CD4-positive, alpha-beta T cell (primary cell): ENCODE measurements at regions of chr20 and their contacts with region 1.

Region 1: GRCh38 chr20:45934586-45935415 is at the start of gene PCIF1:
- DNase-seq: peak; percentile 97 to 100 (median 98)
- ATAC-seq: peak; percentile 77
- H3K4me3 ChIP-seq: peak within 1 kb of the TSS; percentile 100
- H3K4me3 Mint-ChIP-seq: peak within 1 kb of the TSS; percentile 98
- H3K27ac ChIP-seq: peak within 1 kb of the TSS; percentile 96 to 99
- H3K27ac Mint-ChIP-seq: peak within 1 kb of the TSS; percentile 97
- H3K4me1 ChIP-seq: peaks cover 40% of the 10 kb centered on the region
- H3K4me1 Mint-ChIP-seq: peaks cover 34% of the 10 kb centered on the region
- H3K27me3 ChIP-seq: no peaks in the 10 kb centered on the region
- H3K27me3 Mint-ChIP-seq: no peaks in the 10 kb centered on the region
- CTCF ChIP-seq: no peak
- total RNA-seq, gene PCIF1: 100 TPM

Region 2: DNA sequence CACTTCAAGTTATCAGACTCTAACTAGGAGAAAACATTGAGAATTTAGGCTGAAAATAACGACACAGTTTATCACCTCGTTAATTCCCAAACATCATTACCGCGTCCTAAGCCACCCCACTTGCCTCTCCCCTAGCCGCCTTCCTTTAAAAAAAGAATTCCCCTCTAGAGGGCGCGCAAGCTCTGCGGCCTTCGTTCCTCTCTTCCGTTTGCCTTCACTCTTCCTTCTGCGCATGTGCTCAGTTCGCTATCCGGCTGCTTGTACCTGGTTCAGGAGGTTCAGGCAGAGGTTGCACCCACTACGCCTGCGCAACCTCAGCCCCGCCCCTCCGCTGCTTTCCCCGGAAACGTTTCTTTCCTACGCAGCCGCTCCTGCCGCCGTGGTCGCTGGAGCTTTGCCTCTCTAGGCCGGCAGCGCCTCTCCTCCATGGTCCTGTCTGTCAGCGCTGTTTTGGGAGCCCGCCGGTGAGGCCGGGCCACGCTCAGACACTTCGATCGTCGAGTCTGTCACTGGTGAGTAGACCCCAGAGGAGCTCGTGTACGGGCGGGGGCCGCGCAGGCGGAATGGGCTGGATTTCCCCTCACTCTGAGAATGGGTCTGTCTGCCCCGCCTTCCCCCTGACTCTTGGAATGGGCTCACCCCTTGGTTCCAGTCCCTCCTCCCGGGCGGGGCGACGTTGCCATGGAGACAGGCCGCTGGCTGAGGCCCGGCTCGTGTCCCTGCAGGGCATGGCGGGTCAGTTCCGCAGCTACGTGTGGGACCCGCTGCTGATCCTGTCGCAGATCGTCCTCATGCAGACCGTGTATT is 571.8 kb before region 1 on chr20 and contains the start of gene SYS1:
- CTCF ChIA-PET with region 1: no interaction called
- POLR2A ChIA-PET with region 1: interaction called, 10 read pairs
- intact Hi-C with region 1: no loop called
- DNase-seq: peak; percentile 97 to 100 (median 99)
- ATAC-seq: peak; percentile 86
- H3K4me3 ChIP-seq: peak within 1 kb of the TSS; percentile 96
- H3K4me3 Mint-ChIP-seq: peak within 1 kb of the TSS; percentile 91
- H3K27ac ChIP-seq: peak within 1 kb of the TSS; percentile 98 to 99
- H3K27ac Mint-ChIP-seq: peak within 1 kb of the TSS; percentile 85
- H3K4me1 ChIP-seq: peaks cover 55% of the 10 kb centered on the region
- H3K4me1 Mint-ChIP-seq: peaks cover 46% of the 10 kb centered on the region
- H3K27me3 ChIP-seq: no peaks in the 10 kb centered on the region
- H3K27me3 Mint-ChIP-seq: no peaks in the 10 kb centered on the region
- CTCF ChIP-seq: peak; percentile 92
- total RNA-seq, gene SYS1: 94.8 to 107 TPM

Region 3: DNA sequence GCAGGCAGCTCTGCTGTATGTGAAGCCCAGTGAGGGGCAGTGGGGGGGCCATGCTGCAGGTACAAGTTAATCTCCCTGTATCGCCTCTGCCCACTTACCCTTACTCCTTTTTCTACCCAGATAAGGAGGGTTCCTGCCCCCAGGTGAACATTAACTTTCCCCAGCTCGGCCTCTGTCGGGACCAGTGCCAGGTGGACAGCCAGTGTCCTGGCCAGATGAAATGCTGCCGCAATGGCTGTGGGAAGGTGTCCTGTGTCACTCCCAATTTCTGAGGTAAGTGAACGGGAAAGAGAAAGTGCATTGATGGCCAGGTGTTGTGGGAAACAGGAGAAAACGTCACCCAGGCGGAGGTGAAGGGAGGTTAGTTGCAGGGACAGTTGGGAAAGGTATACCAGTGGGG is 455.0 kb before region 1 on chr20:
- CTCF ChIA-PET with region 1: no interaction called
- POLR2A ChIA-PET with region 1: no interaction called
- intact Hi-C with region 1: no loop called
- DNase-seq: no peak
- ATAC-seq: no peak
- H3K4me3 ChIP-seq: no peak overlapping the region
- H3K4me3 Mint-ChIP-seq: no peak overlapping the region
- H3K27ac ChIP-seq: no peak overlapping the region
- H3K27ac Mint-ChIP-seq: no peak overlapping the region
- H3K4me1 ChIP-seq: no peaks in the 10 kb centered on the region
- H3K4me1 Mint-ChIP-seq: no peaks in the 10 kb centered on the region
- H3K27me3 ChIP-seq: peaks cover 20 to 31% of the 10 kb centered on the region in 2 experiments
- H3K27me3 Mint-ChIP-seq: peaks cover 56% of the 10 kb centered on the region
- CTCF ChIP-seq: no peak

Region 4: DNA sequence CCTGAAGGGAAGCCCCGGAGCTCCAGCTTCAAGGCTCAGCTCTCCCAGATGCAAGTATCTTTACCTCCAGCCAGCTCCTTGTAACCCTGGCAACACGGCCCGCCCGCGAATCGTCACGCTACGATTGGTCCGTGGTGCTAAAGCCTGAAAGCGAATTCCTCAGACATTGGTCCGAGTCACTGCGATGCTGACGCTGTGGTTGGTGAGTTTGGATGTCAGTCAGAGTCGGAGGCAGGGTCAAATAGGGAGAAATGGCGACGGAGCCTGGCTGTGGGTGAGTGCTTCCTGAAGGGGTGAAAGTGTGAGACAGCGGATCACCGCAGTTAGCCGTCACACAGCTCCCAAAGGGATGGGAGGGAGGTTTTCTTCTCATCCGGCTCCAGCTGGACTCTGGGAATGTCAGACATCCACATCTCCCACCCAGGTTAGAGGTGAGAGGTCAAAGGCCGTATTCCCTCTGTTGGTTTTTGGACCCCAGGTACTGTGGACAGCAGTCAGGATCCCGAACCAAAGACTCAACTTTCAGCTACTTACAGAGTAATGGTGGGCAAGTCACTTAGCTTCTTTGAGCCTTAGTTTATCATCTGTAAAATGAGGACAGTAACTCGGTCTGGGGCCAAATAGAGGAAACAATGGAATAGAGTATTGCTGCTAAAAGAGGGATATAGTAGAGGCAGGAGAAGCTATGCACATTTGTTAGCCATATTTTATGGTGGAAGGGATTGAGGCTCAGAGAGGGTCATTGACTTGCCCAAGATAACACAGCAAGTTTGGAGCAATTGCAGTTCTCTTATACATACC is 53.6 kb before region 1 on chr20 and contains the start of gene ZSWIM1:
- CTCF ChIA-PET with region 1: no interaction called
- POLR2A ChIA-PET with region 1: interaction called, 57 read pairs
- intact Hi-C with region 1: loop called in 1 of 2 experiments (anchors 2 kb)
- DNase-seq: peak; percentile 96 to 100 (median 99)
- ATAC-seq: peak; percentile 98
- H3K4me3 ChIP-seq: peak within 1 kb of the TSS; percentile 78
- H3K4me3 Mint-ChIP-seq: peak within 1 kb of the TSS; percentile 87
- H3K27ac ChIP-seq: peak within 1 kb of the TSS; percentile 79 to 82
- H3K27ac Mint-ChIP-seq: peak within 1 kb of the TSS; percentile 86
- H3K4me1 ChIP-seq: peaks cover 51% of the 10 kb centered on the region
- H3K4me1 Mint-ChIP-seq: peaks cover 42% of the 10 kb centered on the region
- H3K27me3 ChIP-seq: no peaks in the 10 kb centered on the region
- H3K27me3 Mint-ChIP-seq: no peaks in the 10 kb centered on the region
- CTCF ChIP-seq: no peak
- total RNA-seq, gene ZSWIM1: 9.3 to 10.7 TPM

Region 5: GRCh38 chr20:45910670-45911485 is 23.9 kb before region 1 on chr20:
- CTCF ChIA-PET with region 1: no interaction called
- POLR2A ChIA-PET with region 1: interaction called, 10 read pairs
- intact Hi-C with region 1: loop called in 1 of 2 experiments (anchors 2 kb)
- DNase-seq: peak; percentile 64 to 92 (median 78)
- ATAC-seq: peak; percentile 88
- H3K4me3 ChIP-seq: peak overlapping the region; percentile 53
- H3K4me3 Mint-ChIP-seq: peak overlapping the region; percentile 79
- H3K27ac ChIP-seq: no peak overlapping the region
- H3K27ac Mint-ChIP-seq: no peak overlapping the region
- H3K4me1 ChIP-seq: peaks cover 23% of the 10 kb centered on the region
- H3K4me1 Mint-ChIP-seq: peaks cover 14% of the 10 kb centered on the region
- H3K27me3 ChIP-seq: peaks cover 11 to 17% of the 10 kb centered on the region in 2 experiments
- H3K27me3 Mint-ChIP-seq: peaks cover 24% of the 10 kb centered on the region
- CTCF ChIP-seq: no peak

Region 6: DNA sequence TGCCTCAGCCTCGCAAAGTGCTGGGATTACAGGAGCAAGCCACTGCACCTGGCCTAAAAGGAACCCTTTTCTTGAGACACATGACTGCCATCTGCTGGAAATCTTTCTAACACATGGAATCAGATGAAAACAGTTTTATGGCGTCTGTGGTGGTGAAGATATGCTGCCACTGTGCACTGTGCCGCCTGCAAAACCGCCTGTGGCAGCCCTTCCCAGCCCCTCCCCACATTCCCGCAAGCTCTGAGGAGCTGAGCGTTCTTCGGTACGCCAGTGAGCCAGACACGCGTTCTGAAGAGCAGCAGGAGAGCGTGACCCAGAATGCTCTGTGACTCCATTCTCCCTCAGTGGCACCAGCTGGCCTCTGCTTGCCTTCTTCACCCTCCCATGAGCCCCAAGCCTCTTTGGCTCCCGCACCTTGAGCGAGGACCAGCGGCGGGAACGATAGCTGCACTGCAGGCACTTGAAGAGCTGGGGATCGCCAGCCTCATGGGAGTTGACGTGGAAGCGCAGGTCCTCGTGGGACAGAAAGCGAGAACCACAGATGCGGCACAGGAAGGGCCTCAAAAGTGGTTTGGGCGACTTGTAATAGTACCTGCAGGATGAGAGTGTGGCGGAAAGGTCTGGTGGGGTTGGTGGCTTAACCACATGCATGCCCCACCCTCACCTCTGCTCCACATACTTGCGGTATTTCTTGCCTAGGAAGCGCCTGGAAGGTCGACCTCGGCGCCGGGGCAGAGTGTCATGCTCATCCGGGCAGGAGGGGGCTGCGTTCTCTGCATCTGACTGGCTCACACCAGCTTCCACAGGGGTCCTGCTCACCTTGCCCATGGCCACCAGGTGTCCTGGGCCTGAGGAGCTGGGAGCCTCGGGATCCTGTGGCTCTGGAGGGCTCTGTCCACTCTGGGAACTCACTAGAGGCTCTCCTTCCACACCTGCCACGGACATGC is 28.5 kb after region 1 on chr20:
- CTCF ChIA-PET with region 1: interaction called, 7 read pairs
- POLR2A ChIA-PET with region 1: interaction called, 195 read pairs
- intact Hi-C with region 1: no loop called
- DNase-seq: peak in 3 of 14 experiments; percentile 53 to 69 (median 66)
- ATAC-seq: peak; percentile 61
- H3K4me3 ChIP-seq: no peak overlapping the region
- H3K4me3 Mint-ChIP-seq: peak overlapping the region; percentile 30
- H3K27ac ChIP-seq: no peak overlapping the region
- H3K27ac Mint-ChIP-seq: peak overlapping the region; percentile 59
- H3K4me1 ChIP-seq: peaks cover 13% of the 10 kb centered on the region
- H3K4me1 Mint-ChIP-seq: peaks cover 4% of the 10 kb centered on the region
- H3K27me3 ChIP-seq: no peaks in the 10 kb centered on the region
- H3K27me3 Mint-ChIP-seq: no peaks in the 10 kb centered on the region
- CTCF ChIP-seq: no peak

Region 7: DNA sequence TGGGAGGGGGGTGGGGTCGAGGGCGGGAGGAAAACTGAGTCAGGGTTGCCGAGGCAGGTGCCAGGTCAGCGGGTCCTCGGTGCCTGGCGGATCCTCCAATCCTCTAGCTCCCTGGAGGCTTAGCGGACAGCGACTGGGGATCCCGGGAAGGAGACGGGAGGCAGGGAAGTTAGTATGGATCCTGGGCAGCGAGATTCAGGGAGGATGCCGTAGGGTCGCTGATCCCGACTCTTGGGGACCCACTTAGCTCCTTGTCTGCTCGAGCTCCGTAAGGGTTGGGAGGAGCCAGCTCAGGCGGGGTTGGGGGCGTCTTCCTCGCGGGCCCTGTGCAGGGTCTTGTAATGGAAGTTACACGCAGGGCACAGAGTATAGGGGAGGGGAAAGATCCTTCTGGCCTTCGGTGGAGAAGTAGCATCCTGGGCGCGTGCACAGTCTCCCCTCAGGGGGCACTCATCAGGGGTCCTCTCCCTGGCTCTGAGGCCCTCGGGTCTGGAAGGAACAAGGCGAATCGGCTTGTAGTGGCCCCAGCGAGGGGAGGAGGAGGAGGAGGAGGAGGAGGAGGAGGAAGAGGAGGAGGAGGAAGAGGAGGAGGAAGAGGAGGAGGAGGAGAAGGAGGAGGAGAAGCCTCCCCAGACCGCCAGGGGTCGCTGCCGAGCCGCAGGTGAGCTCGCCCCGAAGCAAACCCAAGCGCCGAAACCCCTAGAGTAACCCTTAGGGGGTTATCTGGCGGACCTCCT is 87.8 kb after region 1 on chr20:
- CTCF ChIA-PET with region 1: no interaction called
- POLR2A ChIA-PET with region 1: no interaction called
- intact Hi-C with region 1: loop called in 1 of 2 experiments (anchors 5 kb)
- DNase-seq: peak; percentile 59 to 85 (median 69)
- ATAC-seq: peak; percentile 59
- H3K4me3 ChIP-seq: peak overlapping the region; percentile 25
- H3K4me3 Mint-ChIP-seq: peak overlapping the region; percentile 69
- H3K27ac ChIP-seq: no peak overlapping the region
- H3K27ac Mint-ChIP-seq: no peak overlapping the region
- H3K4me1 ChIP-seq: peaks cover 25% of the 10 kb centered on the region
- H3K4me1 Mint-ChIP-seq: peaks cover 23% of the 10 kb centered on the region
- H3K27me3 ChIP-seq: peaks cover 25 to 56% of the 10 kb centered on the region in 2 experiments
- H3K27me3 Mint-ChIP-seq: peaks cover 74% of the 10 kb centered on the region
- CTCF ChIP-seq: peak; percentile 75

Region 8: GRCh38 chr20:46406199-46406985 is 471.6 kb after region 1 on chr20 and contains the start of gene ELMO2:
- CTCF ChIA-PET with region 1: no interaction called
- POLR2A ChIA-PET with region 1: interaction called, 10 read pairs
- intact Hi-C with region 1: loop called in 1 of 2 experiments (anchors 1 kb)
- DNase-seq: peak; percentile 88 to 98 (median 94)
- ATAC-seq: peak; percentile 88
- H3K4me3 ChIP-seq: peak within 1 kb of the TSS; percentile 85
- H3K4me3 Mint-ChIP-seq: peak within 1 kb of the TSS; percentile 99
- H3K27ac ChIP-seq: peak within 1 kb of the TSS; percentile 76 to 92
- H3K27ac Mint-ChIP-seq: peak within 1 kb of the TSS; percentile 95
- H3K4me1 ChIP-seq: peaks cover 70% of the 10 kb centered on the region
- H3K4me1 Mint-ChIP-seq: peaks cover 74% of the 10 kb centered on the region
- H3K27me3 ChIP-seq: no peaks in the 10 kb centered on the region
- H3K27me3 Mint-ChIP-seq: no peaks in the 10 kb centered on the region
- CTCF ChIP-seq: no peak
- total RNA-seq, gene ELMO2: 85.6 TPM

Region 9: GRCh38 chr20:47586646-47587306 is 1652.0 kb after region 1 on chr20:
- CTCF ChIA-PET with region 1: no interaction called
- POLR2A ChIA-PET with region 1: no interaction called
- intact Hi-C with region 1: no loop called
- DNase-seq: no peak
- ATAC-seq: no peak
- H3K4me3 ChIP-seq: no peak overlapping the region
- H3K4me3 Mint-ChIP-seq: no peak overlapping the region
- H3K27ac ChIP-seq: no peak overlapping the region
- H3K27ac Mint-ChIP-seq: peak overlapping the region; percentile 23
- H3K4me1 ChIP-seq: no peaks in the 10 kb centered on the region
- H3K4me1 Mint-ChIP-seq: peaks cover 23% of the 10 kb centered on the region
- H3K27me3 ChIP-seq: no peaks in the 10 kb centered on the region
- H3K27me3 Mint-ChIP-seq: no peaks in the 10 kb centered on the region
- CTCF ChIP-seq: no peak